ENCODE measurements at regions of chr12 and their contacts with region 1.

Region 1: GRCh38 chr12:41140117-41140516 is 48.0 kb upstream of the PDZRN4 start:
- DNase-seq: no peak
- ATAC-seq: no peak
- H3K4me3 ChIP-seq: no peak overlapping the region
- H3K27ac ChIP-seq: peak overlapping the region in 1 of 2 donors; percentile 87
- H3K4me1 ChIP-seq: peaks cover 5 to 9% of the 10 kb centered on the region in 2 donors
- H3K27me3 ChIP-seq: no peaks in the 10 kb centered on the region

Region 2: DNA sequence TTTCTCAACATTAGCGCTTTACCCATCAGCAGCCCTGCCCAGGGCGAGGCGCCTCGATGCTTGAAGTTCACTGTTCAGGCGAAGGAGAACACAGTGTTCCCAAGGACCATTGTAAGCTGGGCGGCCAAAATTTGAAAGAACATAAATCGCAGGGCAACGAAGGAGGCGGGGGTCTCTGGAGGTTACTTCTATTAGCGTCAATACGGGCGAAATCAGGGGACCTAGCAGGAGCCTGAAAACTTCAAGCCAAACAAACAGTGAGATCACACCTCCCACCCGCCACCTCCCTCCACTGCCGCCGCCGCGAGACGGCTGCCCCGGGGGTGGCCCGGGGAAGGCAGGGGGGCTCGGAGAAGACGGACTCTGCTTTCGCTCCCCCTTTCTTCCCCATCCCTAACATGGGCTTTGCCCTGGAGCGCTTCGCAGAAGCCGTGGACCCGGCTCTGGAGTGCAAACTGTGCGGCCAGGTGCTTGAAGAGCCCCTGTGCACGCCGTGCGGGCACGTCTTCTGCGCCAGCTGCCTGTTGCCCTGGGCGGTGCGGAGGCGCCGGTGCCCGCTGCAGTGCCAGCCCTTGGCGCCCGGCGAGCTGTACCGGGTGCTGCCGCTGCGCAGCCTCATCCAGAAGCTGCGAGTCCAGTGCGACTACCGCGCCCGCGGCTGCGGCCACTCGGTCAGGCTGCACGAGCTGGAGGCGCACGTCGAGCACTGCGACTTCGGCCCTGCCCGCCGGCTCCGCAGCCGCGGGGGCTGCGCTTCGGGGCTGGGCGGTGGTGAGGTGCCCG is 48.1 kb after region 1 on chr12 and contains the start of gene PDZRN4:
- intact Hi-C with region 1: loop called in 1 of 2 experiments (anchors 5 kb)
- DNase-seq: peak; percentile 53 to 84
- ATAC-seq: peak; percentile 64
- H3K4me3 ChIP-seq: peak within 1 kb of the TSS; percentile 45 to 53
- H3K27ac ChIP-seq: peak within 1 kb of the TSS; percentile 14 to 16
- H3K4me1 ChIP-seq: no peaks in the 10 kb centered on the region
- H3K27me3 ChIP-seq: no peaks in the 10 kb centered on the region
- total RNA-seq, gene PDZRN4: 6.8 to 11.2 TPM

Measured in aorta (tissue), 5 donors.